Mammary epithelial cell (primary cell): ENCODE measurements at regions of chr9 and their contacts with region 1.

Region 1: GRCh38 chr9:120692901-120693699 is 21.2 kb downstream of the MEGF9 start:
- DNase-seq: no peak
- H3K4me3 ChIP-seq: no peak overlapping the region
- H3K27ac ChIP-seq: no peak overlapping the region
- H3K4me1 ChIP-seq: no peaks in the 10 kb centered on the region
- H3K27me3 ChIP-seq: no peaks in the 10 kb centered on the region
- CTCF ChIP-seq: no peak

Region 2: DNA sequence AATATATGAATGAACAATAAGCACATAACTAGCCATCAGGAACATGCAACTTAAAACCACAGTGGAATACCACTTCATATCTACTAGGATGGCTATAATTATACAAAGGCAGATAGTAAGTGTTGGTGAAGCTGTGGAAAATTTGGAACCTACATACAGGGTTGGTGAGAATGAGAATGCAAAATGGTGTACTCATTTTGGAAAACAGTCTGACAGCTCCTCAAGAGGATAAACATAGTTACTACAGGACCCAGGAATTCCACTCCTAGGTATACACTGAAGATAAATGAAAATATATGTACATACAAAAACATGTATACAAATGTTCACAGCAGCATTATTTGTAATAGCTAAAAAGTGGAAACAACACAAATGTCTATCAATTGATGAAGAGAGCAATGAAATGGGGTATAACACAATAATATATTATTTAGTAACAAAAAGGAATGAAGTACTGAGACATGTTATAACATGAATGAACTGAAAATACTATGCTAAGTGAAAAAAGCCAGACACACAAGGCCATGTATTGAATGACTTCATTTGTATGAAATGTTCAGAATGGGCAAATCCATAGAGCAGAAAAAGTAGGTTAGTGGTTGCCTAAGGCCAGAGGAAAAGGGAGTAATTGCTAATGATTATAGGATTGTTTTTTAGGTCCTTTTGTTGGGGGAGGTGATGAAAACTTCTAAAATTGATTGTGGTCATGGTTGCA is 82.0 kb before region 1 on chr9:
- CTCF ChIA-PET with region 1: no interaction called
- dilution Hi-C with region 1: no loop called
- in situ Hi-C with region 1: no loop called
- intact Hi-C with region 1: no loop called
- DNase-seq: peak; percentile 83
- H3K4me3 ChIP-seq: no peak overlapping the region
- H3K27ac ChIP-seq: peak overlapping the region; percentile 74
- H3K4me1 ChIP-seq: peaks cover 52% of the 10 kb centered on the region
- H3K27me3 ChIP-seq: no peaks in the 10 kb centered on the region
- CTCF ChIP-seq: peak; percentile 43 to 45

Region 3: GRCh38 chr9:120655005-120655622 is 38.0 kb before region 1 on chr9:
- CTCF ChIA-PET with region 1: no interaction called
- dilution Hi-C with region 1: no loop called
- in situ Hi-C with region 1: no loop called
- intact Hi-C with region 1: loop called (anchors 5 kb)
- DNase-seq: peak; percentile 73
- H3K4me3 ChIP-seq: no peak overlapping the region
- H3K27ac ChIP-seq: no peak overlapping the region
- H3K4me1 ChIP-seq: peaks cover 8% of the 10 kb centered on the region
- H3K27me3 ChIP-seq: no peaks in the 10 kb centered on the region
- CTCF ChIP-seq: no peak